Transverse colon (tissue), 4 donors: ENCODE measurements at regions of chr6 and their contacts with region 1.

Region 1: DNA sequence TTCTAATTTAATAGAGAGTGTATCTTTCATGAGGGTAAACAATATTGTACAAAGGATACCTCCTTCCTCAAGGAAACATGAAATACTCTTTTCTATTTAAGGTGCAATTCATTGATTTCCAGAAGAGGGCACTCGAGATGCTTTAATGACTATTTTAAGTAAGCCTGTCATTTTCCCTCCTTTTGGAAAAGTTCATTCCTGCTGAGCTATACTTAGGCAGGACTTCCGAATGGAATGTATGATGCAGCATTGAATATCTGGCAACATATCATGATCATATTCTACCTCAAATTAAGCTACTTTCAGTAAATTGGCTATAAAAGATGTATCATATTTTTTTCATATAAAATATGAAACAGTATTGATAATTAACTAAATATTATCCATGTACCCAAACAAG is 5.0 kb downstream of the DST start:
- DNase-seq: no peak
- H3K4me3 ChIP-seq: no peak overlapping the region
- H3K27ac ChIP-seq: peak overlapping the region in 2 of 4 donors; percentile 8 to 48
- H3K4me1 ChIP-seq: peaks cover 0 to 5% (median under 1%) of the 10 kb centered on the region in 4 donors
- H3K27me3 ChIP-seq: no peaks in the 10 kb centered on the region
- CTCF ChIP-seq: peak; percentile 58 to 75 (median 64)
- EP300 ChIP-seq: no peak
- POLR2A ChIP-seq: no peak

Region 2: GRCh38 chr6:56359201-56359899 is 278.3 kb before region 1 on chr6:
- in situ Hi-C with region 1: no loop called
- intact Hi-C with region 1: no loop called
- DNase-seq: peak; percentile 66
- H3K4me3 ChIP-seq: no peak overlapping the region
- H3K27ac ChIP-seq: no peak overlapping the region
- H3K4me1 ChIP-seq: peaks cover 0 to 8% (median 3%) of the 10 kb centered on the region in 4 donors
- H3K27me3 ChIP-seq: no peaks in the 10 kb centered on the region
- CTCF ChIP-seq: peak; percentile 72 to 89 (median 81)
- EP300 ChIP-seq: no peak
- POLR2A ChIP-seq: no peak

Region 3: GRCh38 chr6:56595490-56596122 is 42.0 kb before region 1 on chr6:
- in situ Hi-C with region 1: no loop called
- intact Hi-C with region 1: no loop called
- DNase-seq: peak; percentile 35
- H3K4me3 ChIP-seq: no peak overlapping the region
- H3K27ac ChIP-seq: no peak overlapping the region
- H3K4me1 ChIP-seq: peaks cover 0 to 9% (median 4%) of the 10 kb centered on the region in 4 donors
- H3K27me3 ChIP-seq: no peaks in the 10 kb centered on the region
- CTCF ChIP-seq: peak; percentile 44 to 60 (median 58)
- EP300 ChIP-seq: no peak
- POLR2A ChIP-seq: no peak

Region 4: DNA sequence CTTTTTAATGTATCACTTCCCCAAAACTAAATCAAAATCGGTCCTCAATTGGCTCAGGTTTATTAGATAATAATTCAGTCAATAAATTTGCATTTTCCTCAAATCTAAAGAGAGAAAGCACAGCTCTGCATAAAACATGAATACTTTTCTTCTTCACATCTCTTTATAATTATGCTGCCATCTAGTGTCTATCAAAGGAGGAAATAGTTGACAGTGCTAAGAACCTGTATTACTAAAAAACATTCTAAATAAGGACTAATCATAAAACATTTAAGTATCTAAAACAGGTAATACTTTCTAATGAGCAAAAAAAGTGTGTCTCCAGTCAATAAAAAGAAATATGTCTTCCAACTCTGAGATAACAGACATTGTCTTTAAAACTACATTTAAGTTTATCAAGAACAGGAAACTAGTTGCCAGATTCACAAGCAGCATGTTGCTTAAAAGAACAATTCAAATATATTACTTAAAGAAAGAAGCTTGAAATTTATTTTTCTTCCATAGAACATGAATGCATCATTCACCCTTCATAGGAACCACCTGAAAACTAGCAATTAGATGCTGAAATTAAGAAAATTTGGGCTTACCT is 61.5 kb after region 1 on chr6:
- in situ Hi-C with region 1: loop called in 3 of 4 experiments (anchors 5 to 10 kb)
- intact Hi-C with region 1: loop called (anchors 2 kb)
- DNase-seq: no peak
- H3K4me3 ChIP-seq: no peak overlapping the region
- H3K27ac ChIP-seq: no peak overlapping the region
- H3K4me1 ChIP-seq: peaks cover 0 to 29% (median 7%) of the 10 kb centered on the region in 4 donors
- H3K27me3 ChIP-seq: no peaks in the 10 kb centered on the region
- CTCF ChIP-seq: peak; percentile 48 to 65 (median 57)
- EP300 ChIP-seq: no peak
- POLR2A ChIP-seq: no peak

Region 5: DNA sequence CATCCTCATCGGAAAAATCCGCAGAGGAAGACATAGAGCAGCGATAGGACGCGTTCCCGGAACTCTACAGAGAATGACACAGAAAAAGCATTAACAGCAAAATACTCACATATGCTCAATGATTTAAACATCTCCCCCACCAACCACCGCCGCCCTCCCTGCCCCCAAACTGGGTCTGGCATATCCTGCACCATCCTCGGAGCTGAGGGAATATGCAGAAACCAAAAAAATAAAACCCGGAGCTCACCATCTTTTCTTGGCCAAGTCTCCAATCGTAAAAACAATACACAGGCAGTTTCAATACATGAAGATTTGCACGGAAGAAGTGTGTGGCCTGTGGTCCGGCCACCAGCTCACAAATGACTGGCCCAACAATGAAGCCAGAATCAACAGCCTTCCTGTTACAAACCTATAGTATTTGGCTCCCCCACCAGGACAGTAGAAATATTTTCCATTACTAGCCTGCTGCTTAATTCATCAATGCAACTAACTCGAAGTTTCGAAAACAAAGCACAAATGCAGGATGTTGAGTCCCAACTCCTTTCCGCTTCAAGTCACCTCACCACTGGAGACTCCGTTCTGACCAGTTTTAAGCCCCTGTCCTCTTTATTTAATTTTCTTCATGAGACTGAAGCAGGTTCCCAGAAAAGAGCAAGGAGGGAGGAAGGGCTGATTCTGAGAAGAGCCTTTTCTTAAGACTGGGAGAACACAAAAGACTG is 214.1 kb after region 1 on chr6:
- in situ Hi-C with region 1: loop called in 2 of 4 experiments (anchors 10 to 25 kb)
- intact Hi-C with region 1: loop called (anchors 5 kb)
- DNase-seq: no peak
- H3K4me3 ChIP-seq: peak overlapping the region in 3 of 4 donors; percentile 20 to 47 (median 33)
- H3K27ac ChIP-seq: peak overlapping the region; percentile 47 to 69 (median 64)
- H3K4me1 ChIP-seq: peaks cover 0 to 17% (median 3%) of the 10 kb centered on the region in 4 donors
- H3K27me3 ChIP-seq: no peaks in the 10 kb centered on the region
- CTCF ChIP-seq: peak; percentile 38 to 53 (median 40)
- EP300 ChIP-seq: no peak
- POLR2A ChIP-seq: no peak